ENCODE measurements at regions of chr18 and their contacts with region 1.

Region 1: GRCh38 chr18:3771121-3771971 is 321.4 kb downstream of the TGIF1 start:
- DNase-seq: peak; percentile 86 to 95 (median 94)
- ATAC-seq: peak; percentile 99 to 100
- H3K4me3 ChIP-seq: peak overlapping the region; percentile 39
- H3K27ac ChIP-seq: no peak overlapping the region
- H3K4me1 ChIP-seq: no peaks in the 10 kb centered on the region
- H3K27me3 ChIP-seq: no peaks in the 10 kb centered on the region

Region 2: DNA sequence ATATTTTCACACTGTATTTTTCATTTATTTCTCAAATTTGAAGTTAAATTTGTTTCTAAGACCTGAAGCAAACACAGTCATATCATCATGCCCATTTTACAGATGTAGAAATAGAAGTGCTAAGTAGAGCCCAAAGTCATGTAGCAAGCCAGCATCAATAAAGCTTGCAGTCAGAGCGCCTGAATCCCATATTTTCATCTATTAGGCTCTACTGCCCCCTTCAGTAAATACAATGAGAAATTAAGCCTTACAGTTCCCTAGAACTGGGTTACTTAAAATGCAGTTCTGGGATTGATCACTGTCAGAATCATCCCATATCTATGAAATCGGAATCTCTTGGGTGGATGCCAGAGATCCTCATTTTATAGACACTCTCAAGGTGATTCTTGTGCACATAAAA is 98.5 kb after region 1 on chr18:
- intact Hi-C with region 1: loop called in 1 of 4 experiments (anchors 10 kb)
- DNase-seq: no peak
- ATAC-seq: peak in 1 of 2 donors; percentile 64
- H3K4me3 ChIP-seq: no peak overlapping the region
- H3K27ac ChIP-seq: no peak overlapping the region
- H3K4me1 ChIP-seq: peaks cover 2% of the 10 kb centered on the region
- H3K27me3 ChIP-seq: no peaks in the 10 kb centered on the region

Region 3: DNA sequence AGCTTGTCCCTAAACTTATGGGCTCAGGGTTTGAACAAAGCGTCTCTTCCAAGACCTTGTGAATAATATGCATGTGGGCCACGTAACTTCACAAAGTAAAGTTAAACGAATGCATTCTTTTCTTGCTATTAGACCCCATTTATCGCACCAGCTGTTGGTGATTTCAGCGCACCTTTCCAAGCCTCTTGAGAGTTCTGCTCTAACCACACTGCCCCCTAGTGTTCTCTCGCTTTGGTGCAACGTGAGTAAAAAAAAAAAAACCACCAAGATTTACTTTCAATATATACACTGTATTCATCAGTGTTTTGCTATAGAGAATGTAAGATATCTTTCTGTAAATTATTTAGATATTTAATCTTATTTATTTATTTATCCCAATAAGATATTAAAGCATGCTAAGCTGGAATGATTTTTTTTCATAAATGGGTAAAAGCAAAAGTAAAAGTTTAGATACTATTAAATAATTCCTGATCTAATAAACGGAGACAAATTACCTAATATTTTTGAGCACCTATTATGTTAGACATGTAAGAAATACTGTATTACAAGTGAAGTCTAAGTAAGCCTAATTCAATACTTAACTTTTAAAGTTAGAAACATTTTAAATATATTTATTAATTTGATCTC is 224.2 kb after region 1 on chr18:
- intact Hi-C with region 1: loop called in 3 of 4 experiments (anchors 5 kb)
- DNase-seq: peak in 1 of 3 donors; percentile 45
- ATAC-seq: peak in 1 of 2 donors; percentile 51
- H3K4me3 ChIP-seq: no peak overlapping the region
- H3K27ac ChIP-seq: no peak overlapping the region
- H3K4me1 ChIP-seq: no peaks in the 10 kb centered on the region
- H3K27me3 ChIP-seq: no peaks in the 10 kb centered on the region

Region 4: GRCh38 chr18:4004183-4004829 is 233.0 kb after region 1 on chr18:
- intact Hi-C with region 1: loop called in 3 of 4 experiments (anchors 2 to 5 kb)
- DNase-seq: no peak
- ATAC-seq: no peak
- H3K4me3 ChIP-seq: no peak overlapping the region
- H3K27ac ChIP-seq: no peak overlapping the region
- H3K4me1 ChIP-seq: no peaks in the 10 kb centered on the region
- H3K27me3 ChIP-seq: no peaks in the 10 kb centered on the region

Region 5: DNA sequence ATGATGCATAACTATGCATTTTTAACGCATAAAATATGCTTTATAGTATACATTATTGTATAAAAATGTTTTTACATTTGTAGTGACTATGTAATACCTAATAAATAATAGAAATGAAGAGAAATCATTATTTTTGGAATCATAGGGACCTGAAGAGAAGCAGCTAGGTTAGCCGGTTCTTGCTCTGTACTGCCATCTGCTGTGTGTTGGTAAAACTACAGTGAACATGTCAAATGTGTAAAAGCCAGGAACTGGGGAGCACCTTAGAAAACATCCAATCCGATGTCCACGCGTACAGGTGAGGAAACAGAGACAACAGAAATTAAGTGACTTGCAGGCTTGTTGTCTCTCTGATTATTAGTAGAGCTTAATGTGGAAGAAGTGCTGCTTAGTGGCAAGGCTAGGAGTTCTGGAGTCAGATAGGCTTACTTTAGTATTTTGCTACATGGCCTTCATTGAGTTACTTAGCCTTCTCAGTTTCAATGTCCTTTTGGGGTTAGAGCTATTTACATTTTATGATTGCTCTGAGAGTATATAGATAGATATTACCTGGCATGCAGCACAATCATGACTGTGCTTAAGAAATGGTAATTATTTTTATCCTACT is 297.3 kb after region 1 on chr18:
- intact Hi-C with region 1: loop called in 2 of 4 experiments (anchors 5 kb)
- DNase-seq: no peak
- ATAC-seq: no peak
- H3K4me3 ChIP-seq: no peak overlapping the region
- H3K27ac ChIP-seq: no peak overlapping the region
- H3K4me1 ChIP-seq: no peaks in the 10 kb centered on the region
- H3K27me3 ChIP-seq: no peaks in the 10 kb centered on the region

Measured in right cardiac atrium (tissue), 5 donors.